MCF 10A (cell line): ENCODE measurements at regions of chr1 and their contacts with region 1.

Region 1: GRCh38 chr1:214422137-214422671 is 129.2 kb downstream of the PTPN14 start:
- DNase-seq: peak; percentile 84
- H3K4me3 Mint-ChIP-seq: peak overlapping the region; percentile 6
- H3K27ac Mint-ChIP-seq: peak overlapping the region; percentile 80
- H3K4me1 Mint-ChIP-seq: peaks cover 77% of the 10 kb centered on the region
- H3K27me3 Mint-ChIP-seq: no peaks in the 10 kb centered on the region
- CTCF ChIP-seq: no peak

Region 2: DNA sequence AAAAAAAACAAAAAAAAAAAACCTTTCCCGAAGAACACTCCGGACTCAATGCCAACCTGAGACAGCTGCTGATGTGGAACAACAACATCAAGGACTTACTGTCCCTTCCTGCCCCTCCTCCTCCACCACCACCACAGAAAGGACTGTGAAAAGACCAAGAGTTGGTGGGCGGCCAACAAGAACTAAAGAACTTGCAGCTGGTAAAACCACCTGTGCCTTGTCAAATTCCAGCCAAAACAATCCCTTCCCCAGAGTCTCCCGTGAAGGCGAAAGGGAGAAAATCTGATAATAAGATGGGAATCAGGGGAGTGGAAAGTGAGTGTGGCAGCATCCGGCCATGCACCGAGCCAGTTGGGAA is 345.5 kb before region 1 on chr1:
- CTCF ChIA-PET with region 1: no interaction called
- POLR2A ChIA-PET with region 1: no interaction called
- intact Hi-C with region 1: no loop called
- DNase-seq: no peak
- H3K4me3 Mint-ChIP-seq: no peak overlapping the region
- H3K27ac Mint-ChIP-seq: no peak overlapping the region
- H3K4me1 Mint-ChIP-seq: peaks cover 7% of the 10 kb centered on the region
- H3K27me3 Mint-ChIP-seq: peaks cover 90% of the 10 kb centered on the region
- CTCF ChIP-seq: no peak

Region 3: DNA sequence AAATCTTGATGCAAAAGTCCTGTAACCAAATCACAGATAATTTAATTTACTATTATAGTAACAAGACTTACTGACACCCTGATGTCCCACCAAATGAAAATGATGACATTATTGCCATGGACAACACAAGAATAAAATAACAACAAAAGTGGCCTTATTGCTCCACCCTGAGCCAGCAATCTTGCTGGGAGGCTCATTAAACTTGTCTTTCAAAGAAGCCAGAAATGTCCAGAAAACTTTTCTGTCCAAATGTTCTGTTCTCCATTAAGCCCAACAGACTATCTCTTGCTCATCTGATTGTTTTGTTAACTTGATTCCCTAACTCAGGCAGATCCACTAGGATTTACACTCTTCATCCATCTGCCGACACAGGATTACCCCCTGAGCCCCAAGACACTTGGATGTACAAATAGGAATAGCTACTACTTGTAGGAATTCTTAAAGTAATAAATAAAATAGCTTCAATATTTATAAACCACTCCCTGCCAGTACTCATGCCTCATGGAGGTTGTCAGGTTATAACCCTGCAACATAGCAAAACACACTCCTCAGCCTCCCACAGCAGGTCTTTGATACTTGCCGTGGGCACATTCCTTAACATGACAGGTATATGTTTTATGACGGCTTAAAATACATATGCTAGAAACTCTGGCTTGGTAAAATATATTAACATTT is 44.3 kb after region 1 on chr1:
- CTCF ChIA-PET with region 1: interaction called, 5 read pairs
- POLR2A ChIA-PET with region 1: interaction called, 112 read pairs
- intact Hi-C with region 1: loop called (anchors 10 kb)
- DNase-seq: peak; percentile 54
- H3K4me3 Mint-ChIP-seq: peak overlapping the region; percentile 37
- H3K27ac Mint-ChIP-seq: peak overlapping the region; percentile 88
- H3K4me1 Mint-ChIP-seq: peaks cover 65% of the 10 kb centered on the region
- H3K27me3 Mint-ChIP-seq: no peaks in the 10 kb centered on the region
- CTCF ChIP-seq: no peak